CD14-positive monocyte (primary cell): ENCODE measurements at regions of chr5 and their contacts with region 1.

Region 1: DNA sequence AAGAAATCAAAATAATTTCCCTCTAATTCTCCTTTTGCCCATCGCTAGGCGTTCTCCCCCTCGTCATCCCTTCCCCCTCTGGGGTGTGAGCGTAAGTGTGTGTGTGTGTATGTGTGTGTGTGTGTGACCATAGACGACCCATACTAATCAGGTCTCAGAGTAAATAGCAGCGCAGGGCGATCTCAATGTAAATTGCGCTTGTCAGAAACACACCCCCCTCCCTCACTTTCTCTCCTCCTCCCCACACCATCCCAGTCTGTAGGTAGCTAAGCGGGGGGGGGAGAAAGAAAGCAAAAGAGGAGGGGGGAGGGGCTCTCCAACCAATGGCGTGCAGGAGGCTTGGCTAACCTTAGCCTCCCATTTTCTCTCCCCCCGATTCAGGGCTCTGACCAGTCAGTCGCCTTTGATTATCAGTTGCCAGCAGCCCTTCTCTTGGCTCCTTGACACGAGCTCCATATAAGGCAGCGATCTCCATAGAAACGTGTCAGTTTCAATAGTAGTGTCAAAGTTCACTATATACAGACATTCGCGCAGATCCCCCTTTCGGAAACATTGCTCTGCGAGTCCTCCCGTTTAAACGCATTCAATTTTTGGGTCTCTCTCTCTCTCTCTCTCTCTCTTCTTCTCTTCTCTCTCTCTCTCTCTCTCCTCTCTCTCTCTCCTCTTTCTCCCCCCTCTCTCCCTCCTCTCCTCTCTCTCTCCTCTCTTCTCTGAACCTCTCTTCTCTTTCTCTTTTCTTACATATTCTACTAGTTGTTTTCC is at the start of gene NR2F1:
- DNase-seq: no peak
- H3K4me3 ChIP-seq: peak within 1 kb of the TSS in 1 of 3 experiments; percentile 53
- H3K4me3 Mint-ChIP-seq: peak within 1 kb of the TSS; percentile 70 to 79
- H3K27ac ChIP-seq: no peak within 1 kb of the TSS
- H3K27ac Mint-ChIP-seq: no peak within 1 kb of the TSS
- H3K4me1 ChIP-seq: peaks cover 37 to 53% of the 10 kb centered on the region in 2 donors
- H3K4me1 Mint-ChIP-seq: peaks cover 44% of the 10 kb centered on the region
- H3K27me3 ChIP-seq: peaks cover 72 to 88% of the 10 kb centered on the region in 2 donors
- H3K27me3 Mint-ChIP-seq: peaks cover 28 to 57% (median 30%) of the 10 kb centered on the region in 3 donors
- CTCF ChIP-seq: no peak
- polyA plus RNA-seq, gene NR2F1: not detected

Region 2: GRCh38 chr5:93794954-93795353 is 212.1 kb after region 1 on chr5:
- intact Hi-C with region 1: loop called (anchors 5 kb)
- DNase-seq: no peak
- H3K4me3 ChIP-seq: no peak overlapping the region
- H3K4me3 Mint-ChIP-seq: no peak overlapping the region
- H3K27ac ChIP-seq: no peak overlapping the region
- H3K27ac Mint-ChIP-seq: peak overlapping the region in 1 of 7 donors; percentile 35
- H3K4me1 ChIP-seq: no peaks in the 10 kb centered on the region
- H3K4me1 Mint-ChIP-seq: peaks cover 4% of the 10 kb centered on the region
- H3K27me3 ChIP-seq: no peaks in the 10 kb centered on the region
- H3K27me3 Mint-ChIP-seq: peaks cover 0 to 1% (median 1%) of the 10 kb centered on the region in 3 donors
- CTCF ChIP-seq: no peak

Region 3: GRCh38 chr5:93800988-93801811 is 218.3 kb after region 1 on chr5:
- intact Hi-C with region 1: loop called (anchors 5 kb)
- DNase-seq: peak in 2 of 3 donors; percentile 3 to 9
- H3K4me3 ChIP-seq: no peak overlapping the region
- H3K4me3 Mint-ChIP-seq: no peak overlapping the region
- H3K27ac ChIP-seq: no peak overlapping the region
- H3K27ac Mint-ChIP-seq: no peak overlapping the region
- H3K4me1 ChIP-seq: no peaks in the 10 kb centered on the region
- H3K4me1 Mint-ChIP-seq: no peaks in the 10 kb centered on the region
- H3K27me3 ChIP-seq: no peaks in the 10 kb centered on the region
- H3K27me3 Mint-ChIP-seq: no peaks in the 10 kb centered on the region
- CTCF ChIP-seq: peak; percentile 73

Region 4: DNA sequence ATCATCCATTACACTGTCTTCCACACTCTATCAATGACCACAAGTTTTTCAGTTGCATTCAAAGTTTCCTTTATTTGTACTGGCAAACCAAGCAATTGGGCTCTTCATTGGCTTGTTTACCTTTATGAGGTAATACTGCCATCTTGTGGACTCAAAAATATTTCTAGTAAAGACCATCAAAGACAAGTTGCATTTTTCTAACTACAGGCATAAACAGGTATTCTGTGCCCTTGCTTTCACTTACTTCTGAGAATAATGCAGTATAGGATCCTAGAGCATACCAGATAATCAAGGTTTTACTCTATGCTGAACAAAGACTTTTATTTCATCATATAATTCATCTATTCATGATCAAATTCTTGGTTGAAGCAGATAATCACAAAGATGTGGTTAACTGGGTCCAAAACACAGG is 332.3 kb after region 1 on chr5:
- intact Hi-C with region 1: loop called (anchors 10 kb)
- DNase-seq: peak; percentile 2 to 22 (median 10)
- H3K4me3 ChIP-seq: no peak overlapping the region
- H3K4me3 Mint-ChIP-seq: no peak overlapping the region
- H3K27ac ChIP-seq: no peak overlapping the region
- H3K27ac Mint-ChIP-seq: no peak overlapping the region
- H3K4me1 ChIP-seq: no peaks in the 10 kb centered on the region
- H3K4me1 Mint-ChIP-seq: no peaks in the 10 kb centered on the region
- H3K27me3 ChIP-seq: no peaks in the 10 kb centered on the region
- H3K27me3 Mint-ChIP-seq: no peaks in the 10 kb centered on the region
- CTCF ChIP-seq: peak; percentile 61